HEK293 (cell line): ENCODE measurements at regions of chr5 and their contacts with region 1.

Region 1: GRCh38 chr5:10353241-10354047 is at the start of gene MARCHF6:
- H3K4me3 ChIP-seq: peak within 1 kb of the TSS; percentile 94
- H3K27ac ChIP-seq: peak within 1 kb of the TSS; percentile 99
- H3K4me1 ChIP-seq: peaks cover 18% of the 10 kb centered on the region
- CTCF ChIP-seq: no peak; the same call in 1 of the 2 replicates

Region 2: GRCh38 chr5:10091701-10092100 is 261.7 kb before region 1 on chr5:
- CTCF ChIA-PET with region 1: no interaction called
- POLR2A ChIA-PET with region 1: no interaction called
- H3K4me3 ChIP-seq: no peak overlapping the region
- H3K27ac ChIP-seq: no peak overlapping the region
- H3K4me1 ChIP-seq: no peaks in the 10 kb centered on the region
- CTCF ChIP-seq: no peak

Region 3: GRCh38 chr5:10111571-10111970 is 241.9 kb before region 1 on chr5:
- CTCF ChIA-PET with region 1: no interaction called
- POLR2A ChIA-PET with region 1: no interaction called
- H3K4me3 ChIP-seq: no peak overlapping the region
- H3K27ac ChIP-seq: no peak overlapping the region
- H3K4me1 ChIP-seq: no peaks in the 10 kb centered on the region
- CTCF ChIP-seq: peak; percentile 45

Region 4: GRCh38 chr5:10249948-10250803 is 103.3 kb before region 1 on chr5 and contains the start of gene CCT5:
- CTCF ChIA-PET with region 1: no interaction called
- POLR2A ChIA-PET with region 1: interaction called, 25 read pairs
- H3K4me3 ChIP-seq: peak within 1 kb of the TSS; percentile 96
- H3K27ac ChIP-seq: peak within 1 kb of the TSS; percentile 90
- H3K4me1 ChIP-seq: peaks cover 17% of the 10 kb centered on the region
- CTCF ChIP-seq: 0 out of 2 replicates have a peak, but pooled peaks have one; percentile 44

Region 5: DNA sequence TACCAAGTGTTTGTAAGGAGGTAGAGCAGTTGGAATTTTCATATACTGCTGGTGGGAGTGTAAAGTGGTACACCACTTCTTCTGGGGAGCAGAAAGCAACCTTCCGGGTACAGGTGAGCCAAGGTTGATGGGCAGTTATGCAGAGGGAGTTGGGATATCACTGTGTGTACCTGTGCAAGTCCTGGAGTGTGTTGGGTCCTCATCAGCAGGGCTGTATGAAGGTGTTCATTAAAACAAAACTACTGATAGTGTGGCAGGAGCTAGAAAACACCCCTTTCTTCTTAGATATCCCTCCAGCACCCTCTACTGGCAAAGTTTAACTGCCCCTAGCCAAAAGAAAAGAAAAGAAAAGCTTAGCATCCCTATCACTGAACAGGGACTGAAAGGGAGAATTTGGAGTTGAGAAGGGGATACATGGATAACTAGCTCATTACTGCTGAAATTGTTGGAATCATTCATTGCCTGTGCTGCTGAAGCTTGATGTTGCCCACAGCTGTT is 10.8 kb after region 1 on chr5:
- CTCF ChIA-PET with region 1: interaction called, 25 read pairs
- POLR2A ChIA-PET with region 1: interaction called, 23 read pairs
- H3K4me3 ChIP-seq: no peak overlapping the region
- H3K27ac ChIP-seq: no peak overlapping the region
- H3K4me1 ChIP-seq: peaks cover 11% of the 10 kb centered on the region
- CTCF ChIP-seq: no peak; the same call in 1 of the 2 replicates

Region 6: DNA sequence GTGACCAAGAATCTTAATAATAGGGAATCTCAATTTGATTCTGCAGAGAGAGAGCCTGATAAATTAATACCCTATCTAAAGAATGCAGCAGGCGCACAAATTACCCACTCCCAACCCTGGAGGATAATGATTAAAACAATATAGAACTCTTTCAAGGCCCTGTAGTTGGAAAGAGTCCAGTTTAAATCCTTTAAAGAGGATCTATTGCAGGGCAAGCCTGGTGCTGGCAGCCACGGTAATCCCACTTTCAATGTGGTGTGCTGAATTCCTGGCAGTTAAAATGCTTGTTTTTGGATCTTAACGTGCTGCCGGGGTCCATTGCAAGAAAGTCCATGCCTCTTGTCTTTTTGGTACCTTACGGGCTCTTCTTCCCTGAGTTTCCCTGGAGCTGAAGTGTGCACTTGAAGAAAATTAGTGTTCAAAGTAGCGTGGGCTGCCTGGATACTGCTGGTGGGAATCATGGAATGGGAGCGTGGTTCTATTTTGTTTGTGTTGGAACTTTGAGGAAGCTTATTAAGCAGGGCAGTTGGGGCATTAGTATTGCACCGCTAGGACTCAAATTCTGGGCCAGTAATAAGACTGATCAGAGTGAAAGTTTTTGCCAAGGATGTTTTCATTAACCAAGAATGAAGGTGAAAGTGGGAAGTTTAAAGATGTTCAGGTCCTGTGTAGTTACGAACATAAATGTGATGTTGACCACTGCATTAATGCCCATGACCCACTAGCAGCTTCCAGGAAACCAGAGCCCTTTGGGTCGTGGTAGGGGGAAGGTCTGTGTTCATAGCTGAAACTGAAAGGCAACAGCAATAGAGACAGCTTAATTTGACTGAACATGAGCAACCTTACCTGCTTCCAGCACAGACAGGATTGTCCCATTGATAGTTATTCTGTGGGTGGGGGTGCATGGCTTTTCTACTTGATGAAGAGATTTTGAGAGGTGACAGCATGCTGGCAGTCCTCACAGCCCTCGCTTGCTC is 20.9 kb after region 1 on chr5:
- CTCF ChIA-PET with region 1: interaction called, 12 read pairs
- POLR2A ChIA-PET with region 1: interaction called, 5 read pairs
- H3K4me3 ChIP-seq: no peak overlapping the region
- H3K27ac ChIP-seq: no peak overlapping the region
- H3K4me1 ChIP-seq: no peaks in the 10 kb centered on the region
- CTCF ChIP-seq: no peak

Region 7: GRCh38 chr5:10432059-10433008 is 78.9 kb after region 1 on chr5:
- CTCF ChIA-PET with region 1: no interaction called
- POLR2A ChIA-PET with region 1: no interaction called
- H3K4me3 ChIP-seq: no peak overlapping the region
- H3K27ac ChIP-seq: no peak overlapping the region
- H3K4me1 ChIP-seq: no peaks in the 10 kb centered on the region
- CTCF ChIP-seq: no peak

Region 8: GRCh38 chr5:10831419-10831818 is 478.0 kb after region 1 on chr5:
- CTCF ChIA-PET with region 1: no interaction called
- POLR2A ChIA-PET with region 1: no interaction called
- H3K4me3 ChIP-seq: no peak overlapping the region
- H3K27ac ChIP-seq: no peak overlapping the region
- H3K4me1 ChIP-seq: no peaks in the 10 kb centered on the region
- CTCF ChIP-seq: no peak